ENCODE measurements at regions of chr12 and their contacts with region 1.

Region 1: DNA sequence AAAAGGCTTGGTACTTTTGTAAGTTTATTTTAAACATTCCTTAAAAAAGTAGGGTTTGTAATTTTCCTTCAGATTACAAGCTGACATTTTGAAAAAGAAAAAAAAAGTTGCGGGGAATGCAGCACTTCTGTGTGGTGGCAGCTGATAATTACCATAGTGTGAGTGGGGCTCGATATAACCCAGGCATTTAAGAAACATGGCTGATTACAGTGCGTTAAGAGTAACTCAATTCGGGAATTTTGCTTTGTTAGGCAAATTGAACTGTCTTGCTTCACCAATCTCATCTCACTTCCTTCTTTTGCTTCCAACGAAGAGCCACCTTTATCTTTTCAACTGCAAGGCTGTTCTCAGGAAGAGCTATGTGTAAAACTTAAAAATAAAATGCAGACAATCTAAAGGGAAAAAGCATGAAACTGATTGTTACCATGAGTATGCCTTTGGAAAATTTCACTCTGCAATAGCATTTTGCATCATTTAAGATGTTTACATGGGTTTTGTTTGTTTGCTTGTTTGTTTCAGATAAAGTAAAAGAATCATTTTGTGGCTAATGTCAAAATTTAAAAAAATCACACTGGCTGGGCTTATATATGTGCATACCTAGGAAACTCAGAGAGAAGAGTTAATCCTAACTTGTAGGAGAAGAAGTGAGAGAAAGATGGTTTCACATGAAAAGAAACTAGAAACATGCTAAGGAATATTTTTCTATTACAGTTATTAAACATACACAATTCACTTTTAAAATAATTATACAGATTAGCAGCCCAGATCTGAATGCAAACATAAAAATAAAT is 295.8 kb upstream of the ATP2B1 start:
- H3K4me3 Mint-ChIP-seq: no peak overlapping the region
- H3K27ac Mint-ChIP-seq: peak overlapping the region; percentile 89
- H3K4me1 Mint-ChIP-seq: peaks cover 28% of the 10 kb centered on the region
- H3K27me3 Mint-ChIP-seq: peaks cover under 1% of the 10 kb centered on the region

Region 2: GRCh38 chr12:89960011-89960507 is 44.4 kb before region 1 on chr12:
- intact Hi-C with region 1: loop called (anchors 5 kb)
- H3K4me3 Mint-ChIP-seq: no peak overlapping the region
- H3K27ac Mint-ChIP-seq: peak overlapping the region; percentile 53
- H3K4me1 Mint-ChIP-seq: peaks cover 15% of the 10 kb centered on the region
- H3K27me3 Mint-ChIP-seq: peaks cover 6% of the 10 kb centered on the region

Region 3: DNA sequence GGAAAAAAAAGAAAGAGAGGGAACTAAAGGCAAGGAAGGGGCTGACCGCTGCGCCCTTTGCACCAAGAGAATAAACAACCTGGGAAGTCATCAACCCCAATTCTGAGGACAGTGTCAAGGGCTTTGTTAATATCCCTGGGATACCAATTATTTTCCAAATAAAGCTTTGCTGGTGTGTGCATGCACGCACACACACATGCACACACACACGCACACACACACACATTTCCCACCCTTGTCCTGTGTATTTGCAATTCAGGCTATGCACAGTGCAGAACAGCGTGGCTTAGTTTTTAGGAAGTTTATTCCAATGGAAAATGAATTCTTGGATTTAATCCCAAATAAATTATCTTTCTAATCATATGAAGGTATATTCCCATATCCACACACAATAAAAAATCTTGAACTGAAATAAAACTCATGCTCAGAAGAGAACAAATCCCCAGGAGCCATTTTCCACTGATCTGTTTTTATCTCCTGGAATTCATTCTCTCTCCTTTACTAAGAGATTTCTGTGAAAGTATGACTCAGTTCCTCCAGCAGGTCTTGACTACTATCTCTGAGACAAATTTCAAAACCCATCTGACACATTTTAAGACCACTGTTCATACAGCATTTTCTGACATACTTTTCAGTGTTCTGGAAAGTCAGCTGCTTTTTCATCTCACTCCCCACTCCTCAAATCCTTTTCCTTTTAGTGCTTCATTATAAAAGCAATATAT is 38.6 kb after region 1 on chr12:
- intact Hi-C with region 1: no loop called
- H3K4me3 Mint-ChIP-seq: no peak overlapping the region
- H3K27ac Mint-ChIP-seq: no peak overlapping the region
- H3K4me1 Mint-ChIP-seq: peaks cover 13% of the 10 kb centered on the region
- H3K27me3 Mint-ChIP-seq: peaks cover 3% of the 10 kb centered on the region

Region 4: GRCh38 chr12:90327793-90328743 is 323.6 kb after region 1 on chr12:
- intact Hi-C with region 1: no loop called
- H3K4me3 Mint-ChIP-seq: no peak overlapping the region
- H3K27ac Mint-ChIP-seq: no peak overlapping the region
- H3K4me1 Mint-ChIP-seq: no peaks in the 10 kb centered on the region
- H3K27me3 Mint-ChIP-seq: no peaks in the 10 kb centered on the region